AG04450 (cell line): ENCODE measurements at regions of chr2 and their contacts with region 1.

Region 1: DNA sequence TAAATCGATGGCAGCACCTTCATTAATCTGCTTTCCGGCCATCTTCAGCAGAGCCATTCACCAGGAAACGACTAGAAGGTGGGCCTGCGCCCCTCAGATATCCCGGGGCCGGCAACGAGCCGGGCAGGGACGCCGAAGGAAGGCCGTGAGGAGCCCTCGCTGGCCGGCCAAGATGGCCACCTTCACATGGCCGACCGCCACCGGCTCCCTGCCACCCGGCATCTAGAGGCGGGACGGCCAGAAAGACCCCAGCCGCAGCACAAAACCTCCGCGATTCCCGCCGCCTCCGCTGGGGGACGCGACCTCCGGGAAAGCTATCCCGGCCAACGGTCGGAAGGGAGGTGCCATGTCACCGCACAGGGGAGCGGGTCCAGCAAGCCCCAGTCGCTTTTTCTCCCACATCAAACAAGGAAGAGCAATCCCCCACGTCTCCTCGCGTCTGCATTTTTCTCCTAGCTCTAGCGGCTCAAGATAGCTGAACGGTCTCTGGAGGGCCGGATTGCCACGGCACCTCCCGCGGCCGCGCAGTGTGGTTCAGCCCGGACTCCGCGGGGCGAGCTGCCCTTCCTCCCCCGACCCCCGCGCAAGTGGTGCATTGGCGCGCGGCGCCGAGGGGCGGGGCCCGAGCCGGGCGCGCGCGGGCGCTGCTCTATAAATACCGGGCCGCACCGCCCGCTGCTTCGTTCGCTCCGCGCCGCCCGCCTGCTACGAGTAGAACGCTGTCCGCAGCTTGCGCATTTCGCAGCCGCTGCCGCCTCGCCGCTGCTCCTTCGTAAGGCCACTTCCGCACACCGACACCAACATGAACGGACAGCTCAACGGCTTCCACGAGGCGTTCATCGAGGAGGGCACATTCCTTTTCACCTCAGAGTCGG is at the start of gene MAT2A:
- DNase-seq: peak; percentile 80
- H3K4me3 ChIP-seq: peak within 1 kb of the TSS; percentile 100
- H3K27ac ChIP-seq: peak within 1 kb of the TSS; percentile 99
- H3K27me3 ChIP-seq: no peaks in the 10 kb centered on the region
- CTCF ChIP-seq: peak; percentile 80
- polyA plus RNA-seq, gene MAT2A: 362 and 409 TPM in 2 replicates

Region 2: DNA sequence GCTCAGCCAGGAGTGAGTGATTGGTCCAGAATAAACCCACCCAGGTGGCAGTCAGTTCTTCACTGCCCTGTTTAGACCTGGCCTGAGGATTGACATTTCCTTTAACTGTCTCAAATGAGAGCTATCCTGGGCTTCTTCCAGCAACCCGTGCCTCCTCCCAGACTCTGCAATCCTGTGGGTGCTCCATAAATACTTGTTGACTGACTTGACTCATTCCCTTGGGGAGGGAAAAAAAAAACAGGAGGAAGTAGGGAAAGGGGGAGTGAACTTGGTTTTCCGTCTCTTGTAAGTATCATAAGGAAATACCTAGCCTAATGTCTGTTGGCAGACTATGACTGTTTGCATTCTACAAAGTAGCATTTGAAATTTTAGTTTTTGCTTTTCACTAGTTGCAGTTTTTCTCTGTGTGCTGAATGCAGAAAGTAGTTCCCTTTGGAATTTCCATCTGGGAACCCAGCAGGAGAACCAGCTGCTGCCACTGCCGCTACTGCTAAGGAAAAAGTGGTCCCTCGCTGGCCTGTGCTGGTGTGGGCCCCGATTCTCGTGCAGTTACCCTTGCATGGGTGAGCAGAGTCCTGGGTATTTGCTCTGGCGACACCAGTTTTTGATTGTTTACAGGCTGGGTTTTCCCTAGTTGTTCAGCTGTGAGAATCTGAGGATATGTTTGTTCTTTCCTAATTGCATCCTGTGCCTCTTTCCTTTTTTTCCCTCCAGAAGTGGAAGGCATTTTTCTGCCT is 289.8 kb before region 1 on chr2:
- CTCF ChIA-PET with region 1: no interaction called
- POLR2A ChIA-PET with region 1: no interaction called
- DNase-seq: peak; percentile 82
- H3K4me3 ChIP-seq: peak overlapping the region; percentile 29; the same call in 1 of the 2 replicates
- H3K27ac ChIP-seq: peak overlapping the region; percentile 90
- H3K27me3 ChIP-seq: no peaks in the 10 kb centered on the region
- CTCF ChIP-seq: no peak

Region 3: DNA sequence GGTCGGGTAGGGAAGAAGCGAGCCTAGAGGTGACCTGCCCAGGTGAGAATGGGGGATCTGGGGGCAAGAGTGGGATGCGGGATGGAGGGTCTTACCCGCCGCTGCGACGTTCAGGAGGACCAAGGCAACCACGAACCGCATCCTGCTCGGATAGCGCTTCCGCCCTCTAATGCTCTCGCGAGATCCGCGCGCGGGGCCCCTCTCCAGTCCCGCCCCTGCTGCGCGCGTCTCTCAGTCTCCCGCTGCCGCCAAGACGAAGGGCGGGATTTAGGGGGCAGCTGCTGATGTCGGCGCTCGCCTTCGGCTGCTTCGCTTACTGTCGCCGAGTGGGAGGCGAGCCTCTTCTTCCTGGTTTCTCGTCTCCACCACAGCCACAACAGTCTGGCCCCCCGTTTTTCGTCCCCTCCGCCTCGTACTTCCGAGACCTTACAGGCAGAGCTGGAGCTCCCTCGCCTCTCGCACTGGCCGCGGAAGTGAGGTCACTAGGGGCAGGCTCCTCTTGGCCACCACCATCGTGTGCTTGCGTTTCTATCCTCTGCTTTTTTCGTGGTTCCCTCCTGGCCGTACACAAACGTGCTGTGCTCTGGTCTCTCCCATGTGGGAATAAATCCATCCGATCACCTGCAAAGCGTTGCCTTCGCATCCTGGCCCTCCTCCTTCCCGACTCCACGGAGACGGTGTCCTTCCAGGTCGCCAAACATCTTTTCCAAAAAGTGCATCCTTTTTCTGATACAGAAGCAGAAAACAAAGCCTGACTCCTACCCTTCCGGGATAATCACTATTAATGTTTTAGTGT is 210.7 kb before region 1 on chr2 and contains the start of gene TGOLN2:
- CTCF ChIA-PET with region 1: no interaction called
- POLR2A ChIA-PET with region 1: interaction called, 18 read pairs
- DNase-seq: peak; percentile 66
- H3K4me3 ChIP-seq: peak within 1 kb of the TSS; percentile 82
- H3K27ac ChIP-seq: peak within 1 kb of the TSS; percentile 80
- H3K27me3 ChIP-seq: no peaks in the 10 kb centered on the region
- CTCF ChIP-seq: no peak; the same call in 1 of the 2 replicates
- polyA plus RNA-seq, gene TGOLN2: 121 and 155 TPM in 2 replicates

Region 4: DNA sequence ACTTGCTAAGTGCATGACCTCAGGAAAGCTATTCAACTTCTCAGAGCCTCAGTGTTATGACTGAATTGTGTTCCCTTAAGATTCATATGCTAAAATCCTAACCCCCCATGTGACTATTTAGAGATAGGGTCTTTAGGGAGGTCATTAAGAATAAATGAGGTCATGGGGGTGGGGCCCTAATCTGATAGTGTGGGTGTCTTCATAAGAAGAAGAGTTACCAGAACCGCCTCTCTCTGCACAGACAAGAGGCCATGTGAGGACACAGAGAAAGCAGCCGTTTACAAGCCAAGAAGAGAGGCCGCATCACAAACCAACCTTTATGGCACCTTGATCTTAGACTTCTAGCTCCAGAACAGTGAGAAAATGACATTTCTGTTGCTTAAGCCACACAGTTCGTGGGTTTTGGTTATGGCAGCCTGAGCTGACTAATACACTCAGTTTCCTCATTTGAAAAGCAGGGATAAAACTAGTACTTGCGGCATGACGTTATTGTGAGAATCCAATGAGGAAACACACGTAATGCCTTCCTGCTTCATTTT is 110.3 kb before region 1 on chr2:
- CTCF ChIA-PET with region 1: interaction called, 5 read pairs
- POLR2A ChIA-PET with region 1: interaction called, 115 read pairs
- DNase-seq: no peak
- H3K4me3 ChIP-seq: no peak overlapping the region
- H3K27ac ChIP-seq: no peak overlapping the region
- H3K27me3 ChIP-seq: no peaks in the 10 kb centered on the region
- CTCF ChIP-seq: no peak

Region 5: GRCh38 chr2:85468704-85469349 is 69.9 kb before region 1 on chr2:
- CTCF ChIA-PET with region 1: interaction called, 4 read pairs
- POLR2A ChIA-PET with region 1: interaction called, 10 read pairs
- DNase-seq: no peak
- H3K4me3 ChIP-seq: no peak overlapping the region
- H3K27ac ChIP-seq: no peak overlapping the region
- H3K27me3 ChIP-seq: no peaks in the 10 kb centered on the region
- CTCF ChIP-seq: no peak

Region 6: DNA sequence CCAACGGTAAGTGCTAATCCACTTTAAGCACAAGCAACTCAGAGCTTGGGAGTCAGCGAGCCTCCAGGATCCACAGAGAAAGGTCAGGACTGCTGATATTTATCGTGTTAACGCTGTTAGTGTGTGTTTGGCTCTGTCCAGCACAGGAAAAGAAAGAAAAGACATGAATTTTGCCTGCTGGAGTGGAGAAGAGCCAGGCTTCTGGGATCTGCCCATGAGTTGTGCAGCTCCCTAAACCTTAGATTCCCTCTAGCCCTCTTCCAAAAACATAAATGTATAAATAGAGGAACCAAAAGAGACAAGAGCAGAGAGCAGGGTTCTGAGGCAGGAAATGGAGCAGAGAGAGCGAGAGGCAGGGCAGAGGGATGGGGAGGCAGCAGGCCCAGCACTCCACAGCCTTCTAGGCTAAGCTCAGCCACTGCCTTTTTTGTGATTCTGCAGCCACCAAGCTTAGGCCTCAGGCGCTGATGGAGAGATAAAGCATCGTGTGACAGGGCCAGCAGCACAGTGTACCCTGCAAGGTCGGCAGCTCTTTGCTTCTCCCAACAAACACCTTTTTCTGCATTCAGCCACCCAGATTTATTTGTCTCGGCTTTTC is 14.3 kb before region 1 on chr2:
- CTCF ChIA-PET with region 1: interaction called, 10 read pairs
- POLR2A ChIA-PET with region 1: interaction called, 21 read pairs
- DNase-seq: no peak
- H3K4me3 ChIP-seq: no peak overlapping the region
- H3K27ac ChIP-seq: peak overlapping the region; percentile 39
- H3K27me3 ChIP-seq: no peaks in the 10 kb centered on the region
- CTCF ChIP-seq: no peak

Region 7: DNA sequence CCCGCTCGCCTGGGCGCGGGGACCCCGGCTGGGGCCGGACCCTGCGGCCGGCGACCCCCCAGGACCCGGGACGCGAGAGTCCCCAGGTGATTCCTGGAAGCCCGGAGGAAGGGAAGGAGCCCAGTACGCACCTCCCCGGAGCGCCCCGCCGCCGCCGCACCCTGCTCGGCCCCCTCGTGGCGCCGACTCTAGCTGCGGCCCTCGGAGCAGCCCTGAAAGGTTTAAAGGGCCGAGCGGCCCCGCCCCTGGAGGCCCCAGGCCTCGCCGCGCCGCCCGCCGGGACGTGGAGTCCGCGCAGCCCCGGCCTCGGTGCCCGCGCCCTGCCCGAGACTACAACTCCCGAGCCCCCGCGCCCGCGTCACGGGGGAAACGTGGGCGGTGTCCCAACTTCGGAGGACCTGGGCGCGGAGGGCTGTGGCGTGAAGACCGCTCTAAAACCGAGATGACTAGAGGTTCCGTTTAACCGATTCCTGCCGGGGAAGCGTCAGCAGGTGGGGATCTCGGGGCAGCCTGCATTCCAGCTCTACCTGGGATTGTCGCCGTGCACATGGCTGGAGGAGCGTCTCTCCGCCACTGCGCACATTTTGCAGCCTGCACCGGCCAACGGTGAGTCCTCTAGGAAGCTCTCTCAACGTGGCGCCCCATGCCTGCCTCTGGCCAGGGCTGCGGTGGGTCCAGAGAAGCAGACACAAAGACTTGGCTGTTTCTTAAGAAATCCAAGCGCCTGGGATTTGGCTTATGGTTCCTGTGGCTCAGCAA is 63.9 kb after region 1 on chr2 and contains the start of gene TMEM150A:
- CTCF ChIA-PET with region 1: interaction called, 3 read pairs
- POLR2A ChIA-PET with region 1: interaction called, 11 read pairs
- DNase-seq: peak; percentile 44
- H3K4me3 ChIP-seq: peak within 1 kb of the TSS; percentile 96
- H3K27ac ChIP-seq: peak within 1 kb of the TSS; percentile 61
- H3K27me3 ChIP-seq: no peaks in the 10 kb centered on the region
- CTCF ChIP-seq: peak; percentile 36; the same call in 1 of the 2 replicates
- polyA plus RNA-seq, gene TMEM150A: 11.4 and 14.5 TPM in 2 replicates

Region 8: GRCh38 chr2:85924522-85924921 is 385.8 kb after region 1 on chr2:
- CTCF ChIA-PET with region 1: no interaction called
- POLR2A ChIA-PET with region 1: no interaction called
- DNase-seq: no peak
- H3K4me3 ChIP-seq: no peak overlapping the region
- H3K27ac ChIP-seq: no peak overlapping the region
- H3K27me3 ChIP-seq: no peaks in the 10 kb centered on the region
- CTCF ChIP-seq: no peak

Region 9: DNA sequence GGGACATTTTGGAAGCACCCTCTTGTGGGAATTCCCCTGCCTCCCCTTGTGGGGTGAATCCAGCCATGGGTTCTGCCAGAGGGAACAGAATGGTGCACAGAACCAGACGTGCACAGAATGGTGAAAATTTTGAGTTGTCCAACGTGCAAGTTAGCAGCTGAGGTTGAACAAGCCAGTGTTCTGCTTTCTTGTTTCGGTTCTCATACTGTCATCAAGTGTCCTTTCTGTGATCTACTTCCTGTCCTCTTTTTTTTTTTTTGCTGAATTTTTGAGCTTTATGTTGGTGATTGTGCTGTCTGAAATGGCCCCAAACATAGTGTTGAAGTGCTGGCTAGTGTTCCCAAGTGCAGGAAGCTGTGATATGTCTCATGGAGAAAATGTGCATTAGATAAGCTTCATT is 820.2 kb after region 1 on chr2:
- CTCF ChIA-PET with region 1: no interaction called
- POLR2A ChIA-PET with region 1: no interaction called
- DNase-seq: no peak
- H3K4me3 ChIP-seq: no peak overlapping the region
- H3K27ac ChIP-seq: no peak overlapping the region
- H3K27me3 ChIP-seq: peaks cover 6% of the 10 kb centered on the region
- CTCF ChIP-seq: no peak